ENCODE measurements at regions of chr1 and their contacts with region 1.

Region 1: GRCh38 chr1:17661546-17662157 is 93.5 kb upstream of the ACTL8 start:
- DNase-seq: peak; percentile 23
- H3K4me3 ChIP-seq: no peak overlapping the region
- H3K27ac ChIP-seq: no peak overlapping the region
- H3K27me3 ChIP-seq: no peaks in the 10 kb centered on the region
- CTCF ChIP-seq: peak; percentile 89

Region 2: DNA sequence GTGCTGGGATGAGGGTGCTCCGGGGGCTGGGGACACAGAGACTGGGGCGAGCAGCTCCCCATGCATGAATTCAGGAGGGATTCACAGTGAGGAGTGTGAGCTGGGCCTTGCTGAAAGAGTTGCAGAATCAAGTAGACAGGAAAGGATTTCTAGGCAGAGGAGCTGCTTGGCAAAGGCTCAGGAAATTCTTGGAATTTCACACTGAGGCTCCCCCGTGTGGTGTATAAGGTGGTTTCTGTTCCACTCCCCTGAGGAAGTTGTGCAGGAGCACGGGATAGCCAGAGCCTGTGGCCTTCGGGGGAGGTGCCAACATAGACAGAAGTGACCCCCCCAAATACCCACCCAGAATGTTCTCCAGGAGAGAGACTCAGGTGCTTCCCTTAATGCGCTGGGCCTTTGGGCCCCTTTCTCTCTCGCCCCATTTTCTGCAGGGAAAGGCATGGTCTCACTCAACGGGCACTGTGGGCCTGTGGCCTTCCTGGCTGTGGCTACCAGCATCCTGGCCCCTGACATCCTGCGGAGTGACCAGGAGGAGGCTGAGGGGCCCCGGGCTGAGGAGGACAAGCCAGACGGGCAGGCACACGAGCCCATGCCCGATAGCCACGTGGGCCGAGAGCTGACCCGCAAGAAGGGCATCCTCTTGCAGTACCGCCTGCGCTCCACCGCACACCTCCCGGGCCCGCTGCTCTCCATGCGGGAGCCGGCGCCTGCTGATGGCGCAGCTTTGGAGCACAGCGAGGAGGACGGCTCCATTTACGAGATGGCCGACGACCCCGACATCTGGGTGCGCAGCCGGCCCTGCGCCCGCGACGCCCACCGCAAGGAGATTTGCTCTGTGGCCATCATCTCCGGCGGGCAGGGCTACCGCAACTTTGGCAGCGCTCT is 35.0 kb after region 1 on chr1:
- CTCF ChIA-PET with region 1: interaction called, 29 read pairs
- POLR2A ChIA-PET with region 1: interaction called, 3 read pairs
- DNase-seq: peak; percentile 52
- H3K4me3 ChIP-seq: no peak overlapping the region
- H3K27ac ChIP-seq: no peak overlapping the region
- H3K27me3 ChIP-seq: no peaks in the 10 kb centered on the region
- CTCF ChIP-seq: peak; percentile 65

Region 3: GRCh38 chr1:17826165-17826488 is 164.5 kb after region 1 on chr1:
- CTCF ChIA-PET with region 1: interaction called, 34 read pairs
- POLR2A ChIA-PET with region 1: no interaction called
- DNase-seq: no peak
- H3K4me3 ChIP-seq: no peak overlapping the region
- H3K27ac ChIP-seq: no peak overlapping the region
- H3K27me3 ChIP-seq: peaks cover 7% of the 10 kb centered on the region
- CTCF ChIP-seq: peak; percentile 68

Region 4: GRCh38 chr1:17874710-17875109 is 213.1 kb after region 1 on chr1:
- CTCF ChIA-PET with region 1: interaction called, 17 read pairs
- POLR2A ChIA-PET with region 1: no interaction called
- DNase-seq: peak; percentile 83
- H3K4me3 ChIP-seq: peak overlapping the region; percentile 27
- H3K27ac ChIP-seq: peak overlapping the region; percentile 99
- H3K27me3 ChIP-seq: no peaks in the 10 kb centered on the region
- CTCF ChIP-seq: no peak

Region 5: GRCh38 chr1:17909634-17910033 is 248.0 kb after region 1 on chr1:
- CTCF ChIA-PET with region 1: interaction called, 10 read pairs
- POLR2A ChIA-PET with region 1: no interaction called
- DNase-seq: no peak
- H3K4me3 ChIP-seq: no peak overlapping the region
- H3K27ac ChIP-seq: no peak overlapping the region
- H3K27me3 ChIP-seq: peaks cover 11% of the 10 kb centered on the region
- CTCF ChIP-seq: peak; percentile 40

Region 6: GRCh38 chr1:18100491-18101063 is 438.9 kb after region 1 on chr1:
- CTCF ChIA-PET with region 1: interaction called, 35 read pairs
- POLR2A ChIA-PET with region 1: no interaction called
- DNase-seq: peak; percentile 18
- H3K4me3 ChIP-seq: no peak overlapping the region
- H3K27ac ChIP-seq: no peak overlapping the region
- H3K27me3 ChIP-seq: peaks cover 5% of the 10 kb centered on the region
- CTCF ChIP-seq: peak; percentile 80

Measured in AG04450 (cell line).